Caco-2 (cell line): ENCODE measurements at regions of chr14 and their contacts with region 1.

Region 1: GRCh38 chr14:61700104-61700886 is 5.0 kb downstream of the HIF1A start:
- DNase-seq: no peak
- H3K4me3 ChIP-seq: no peak overlapping the region
- H3K4me3 Mint-ChIP-seq: peak overlapping the region; percentile 15
- H3K27ac Mint-ChIP-seq: no peak overlapping the region
- H3K4me1 ChIP-seq: peaks cover 17% of the 10 kb centered on the region
- H3K4me1 Mint-ChIP-seq: peaks cover 30% of the 10 kb centered on the region
- H3K27me3 ChIP-seq: no peaks in the 10 kb centered on the region
- H3K27me3 Mint-ChIP-seq: no peaks in the 10 kb centered on the region
- CTCF ChIP-seq: no peak

Region 2: DNA sequence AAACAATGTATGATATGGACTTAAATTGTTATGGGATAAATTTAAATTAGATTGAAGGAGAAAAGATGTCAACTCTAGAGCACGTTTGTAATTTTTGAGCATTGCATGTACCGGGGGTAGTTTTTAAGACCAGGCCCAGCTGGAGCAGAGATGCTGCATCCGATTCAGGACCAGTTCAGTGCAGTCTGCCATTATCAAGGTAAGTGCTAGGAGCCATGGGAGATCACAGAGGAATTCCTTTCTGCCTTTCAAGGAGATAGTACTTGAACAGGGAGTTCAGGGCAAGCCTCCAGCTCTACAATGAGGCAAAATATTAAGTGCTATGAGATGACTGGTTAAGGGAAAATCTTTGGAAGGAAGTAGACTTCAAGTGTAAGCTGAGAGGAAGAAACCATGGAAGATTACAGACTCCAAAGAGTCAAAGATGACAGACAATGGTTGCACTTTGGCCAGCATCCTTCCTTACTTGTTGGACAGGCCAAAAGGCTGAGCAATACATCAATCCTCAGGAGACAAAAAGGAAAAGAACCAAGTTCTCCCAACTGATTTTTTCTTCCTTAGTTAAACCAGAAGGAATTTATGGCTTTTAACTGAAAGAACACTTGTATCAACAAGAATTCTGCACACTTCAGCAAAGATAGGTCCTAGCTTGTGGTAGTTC is 118.2 kb before region 1 on chr14:
- CTCF ChIA-PET with region 1: no interaction called
- POLR2A ChIA-PET with region 1: interaction called, 11 read pairs
- intact Hi-C with region 1: no loop called
- DNase-seq: no peak
- H3K4me3 ChIP-seq: no peak overlapping the region
- H3K4me3 Mint-ChIP-seq: peak overlapping the region; percentile 36
- H3K27ac Mint-ChIP-seq: peak overlapping the region; percentile 48
- H3K4me1 ChIP-seq: peaks cover 26% of the 10 kb centered on the region
- H3K4me1 Mint-ChIP-seq: peaks cover 25% of the 10 kb centered on the region
- H3K27me3 ChIP-seq: no peaks in the 10 kb centered on the region
- H3K27me3 Mint-ChIP-seq: no peaks in the 10 kb centered on the region
- CTCF ChIP-seq: no peak